Activated CD4-positive, alpha-beta T cell treated with anti-CD3 and anti-CD28 coated beads for 36 hours (primary cell): ENCODE measurements at regions of chr6 and their contacts with region 1.

Region 1: GRCh38 chr6:157667211-157668008 is 155.6 kb upstream of the SNX9 start:
- DNase-seq: peak; percentile 73
- ATAC-seq: peak; percentile 48
- H3K4me3 Mint-ChIP-seq: no peak overlapping the region
- H3K27ac Mint-ChIP-seq: no peak overlapping the region
- H3K4me1 Mint-ChIP-seq: peaks cover 31% of the 10 kb centered on the region
- H3K27me3 Mint-ChIP-seq: peaks cover 5% of the 10 kb centered on the region

Region 2: DNA sequence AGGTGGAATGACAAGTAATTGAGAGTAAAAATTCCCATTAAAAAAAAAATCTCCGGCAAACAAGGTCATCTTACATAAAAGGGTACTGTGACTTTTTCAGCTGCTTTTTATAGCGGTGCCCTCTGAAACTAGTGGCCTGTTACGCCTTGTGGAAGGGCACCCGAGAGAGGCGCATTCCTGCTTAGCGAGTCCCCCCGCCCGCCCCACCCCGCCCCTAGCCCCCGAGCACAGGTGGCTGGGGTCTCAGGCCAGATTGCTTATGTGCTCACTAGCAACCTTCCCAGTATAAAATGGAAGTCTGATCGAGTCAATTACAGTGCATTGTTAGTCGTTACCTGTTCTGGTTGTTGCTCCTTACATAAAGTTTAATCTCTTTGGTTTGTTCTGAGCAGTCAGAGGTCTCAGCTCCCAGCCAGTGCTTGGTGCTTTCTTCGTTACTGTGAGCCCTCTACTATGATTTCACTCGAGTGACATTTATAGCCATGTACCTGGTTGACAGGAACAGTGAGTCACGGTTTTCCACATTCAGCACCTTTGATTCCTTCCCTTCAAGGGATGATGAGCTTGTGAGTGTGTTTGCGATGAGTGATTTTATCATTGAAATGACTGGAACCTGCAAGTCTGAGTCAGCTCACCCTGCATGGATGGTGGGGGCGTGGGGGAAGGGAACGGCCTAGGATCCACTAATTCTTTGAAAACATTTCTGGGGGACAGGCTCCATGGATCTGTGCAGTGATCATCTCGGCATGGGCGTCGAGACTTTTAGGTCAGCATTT is 238.8 kb before region 1 on chr6:
- CTCF ChIA-PET with region 1: no interaction called
- POLR2A ChIA-PET with region 1: no interaction called
- intact Hi-C with region 1: no loop called
- DNase-seq: peak; percentile 88
- ATAC-seq: peak; percentile 89
- H3K4me3 Mint-ChIP-seq: peak overlapping the region; percentile 51
- H3K27ac Mint-ChIP-seq: peak overlapping the region; percentile 91
- H3K4me1 Mint-ChIP-seq: peaks cover 46% of the 10 kb centered on the region
- H3K27me3 Mint-ChIP-seq: no peaks in the 10 kb centered on the region

Region 3: DNA sequence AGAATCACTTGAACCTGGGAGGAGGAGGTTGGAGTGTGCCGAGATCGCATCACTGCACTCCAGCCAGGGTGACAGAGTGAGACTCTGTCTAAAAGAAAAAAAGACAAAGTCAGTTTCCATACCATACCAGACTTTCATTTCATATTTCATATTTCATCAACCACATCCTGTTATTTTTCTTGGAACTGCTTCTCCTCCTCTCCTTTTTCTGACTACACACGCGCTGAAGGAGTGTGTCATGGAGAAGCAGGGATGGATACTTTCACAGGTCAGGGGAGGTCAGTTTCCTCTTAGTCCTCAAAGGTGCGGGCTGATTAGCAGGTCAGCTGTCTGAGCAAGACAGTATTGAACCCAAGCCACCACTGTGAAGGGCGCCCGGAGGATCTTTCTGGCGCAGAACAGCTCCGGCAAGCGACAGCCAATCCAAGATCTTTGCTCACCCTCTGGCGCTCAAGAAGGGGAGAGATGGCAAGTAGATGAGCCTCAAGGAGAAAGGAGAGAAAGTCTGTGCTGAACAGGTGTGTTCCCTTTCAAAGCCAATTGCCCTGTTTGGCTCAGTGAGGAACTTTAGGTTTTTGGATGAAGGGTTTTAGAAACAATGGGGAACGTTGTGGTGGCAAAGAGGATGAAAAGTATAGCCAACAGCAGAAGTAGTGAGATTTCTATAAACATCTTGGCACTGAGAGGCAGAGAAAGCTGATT is 295.3 kb after region 1 on chr6:
- CTCF ChIA-PET with region 1: no interaction called
- POLR2A ChIA-PET with region 1: no interaction called
- intact Hi-C with region 1: loop called in 1 of 2 experiments (anchors 5 kb)
- DNase-seq: peak; percentile 54
- ATAC-seq: peak; percentile 86
- H3K4me3 Mint-ChIP-seq: peak overlapping the region; percentile 43
- H3K27ac Mint-ChIP-seq: peak overlapping the region; percentile 92
- H3K4me1 Mint-ChIP-seq: peaks cover 28% of the 10 kb centered on the region
- H3K27me3 Mint-ChIP-seq: peaks cover 1% of the 10 kb centered on the region